ENCODE measurements at regions of chr6 and their contacts with region 1.

Region 1: DNA sequence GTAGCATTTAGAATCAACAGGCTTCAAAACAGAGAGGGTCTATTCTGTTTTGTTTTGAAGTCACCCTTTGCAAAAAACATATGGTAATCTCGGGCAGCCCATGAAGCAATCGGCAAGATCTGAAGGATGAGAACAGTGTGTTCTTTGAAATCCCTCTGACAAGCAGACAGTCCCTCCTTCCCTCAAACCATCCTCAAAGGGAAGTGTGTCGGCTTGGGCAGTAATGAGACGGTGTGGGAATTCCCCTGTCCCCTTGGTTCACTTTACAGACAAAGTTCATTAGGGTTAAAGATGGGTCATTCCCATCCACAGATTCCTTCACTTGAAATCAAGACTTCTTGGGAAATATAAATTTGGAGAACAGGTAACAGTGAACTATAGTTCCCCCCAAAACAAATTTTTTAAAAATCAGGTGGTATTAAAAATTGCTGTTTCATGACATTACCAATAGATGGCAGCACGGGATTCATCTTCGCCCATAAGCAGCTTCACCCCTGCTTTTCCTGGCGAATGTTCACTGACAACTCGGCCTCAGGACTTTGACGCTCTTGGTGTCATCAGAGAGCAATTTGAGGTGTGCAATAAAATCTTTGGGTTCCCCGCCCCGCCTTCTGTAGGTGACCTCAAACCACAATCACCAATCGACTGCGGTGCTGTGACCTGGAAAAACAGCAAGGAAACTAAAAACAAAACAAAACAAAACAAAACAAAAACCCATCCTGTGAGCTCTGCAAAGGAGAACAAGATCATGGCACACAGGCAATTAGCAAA is 159.3 kb upstream of the TNFAIP3 start:
- DNase-seq: peak; percentile 60 to 98 (median 82)
- ATAC-seq: peak; percentile 71
- H3K4me3 ChIP-seq: no peak overlapping the region
- H3K4me3 Mint-ChIP-seq: peak overlapping the region; percentile 3
- H3K27ac ChIP-seq: peak overlapping the region; percentile 46 to 82
- H3K27ac Mint-ChIP-seq: peak overlapping the region; percentile 88
- H3K4me1 ChIP-seq: peaks cover 37% of the 10 kb centered on the region
- H3K4me1 Mint-ChIP-seq: peaks cover 54% of the 10 kb centered on the region
- H3K27me3 ChIP-seq: no peaks in the 10 kb centered on the region
- H3K27me3 Mint-ChIP-seq: no peaks in the 10 kb centered on the region
- CTCF ChIP-seq: peak; percentile 81

Region 2: GRCh38 chr6:136191606-136192312 is 1516.0 kb before region 1 on chr6:
- CTCF ChIA-PET with region 1: no interaction called
- POLR2A ChIA-PET with region 1: no interaction called
- intact Hi-C with region 1: no loop called
- DNase-seq: no peak
- ATAC-seq: no peak
- H3K4me3 ChIP-seq: no peak overlapping the region
- H3K4me3 Mint-ChIP-seq: no peak overlapping the region
- H3K27ac ChIP-seq: no peak overlapping the region
- H3K27ac Mint-ChIP-seq: no peak overlapping the region
- H3K4me1 ChIP-seq: no peaks in the 10 kb centered on the region
- H3K4me1 Mint-ChIP-seq: no peaks in the 10 kb centered on the region
- H3K27me3 ChIP-seq: no peaks in the 10 kb centered on the region
- H3K27me3 Mint-ChIP-seq: no peaks in the 10 kb centered on the region
- CTCF ChIP-seq: no peak

Region 3: GRCh38 chr6:137697267-137697938 is 10.4 kb before region 1 on chr6:
- CTCF ChIA-PET with region 1: interaction called, 10 read pairs
- POLR2A ChIA-PET with region 1: interaction called, 3 read pairs
- intact Hi-C with region 1: no loop called
- DNase-seq: no peak
- ATAC-seq: no peak
- H3K4me3 ChIP-seq: no peak overlapping the region
- H3K4me3 Mint-ChIP-seq: no peak overlapping the region
- H3K27ac ChIP-seq: no peak overlapping the region
- H3K27ac Mint-ChIP-seq: no peak overlapping the region
- H3K4me1 ChIP-seq: peaks cover 12% of the 10 kb centered on the region
- H3K4me1 Mint-ChIP-seq: peaks cover 14% of the 10 kb centered on the region
- H3K27me3 ChIP-seq: no peaks in the 10 kb centered on the region
- H3K27me3 Mint-ChIP-seq: peaks cover 2% of the 10 kb centered on the region
- CTCF ChIP-seq: no peak

Region 4: DNA sequence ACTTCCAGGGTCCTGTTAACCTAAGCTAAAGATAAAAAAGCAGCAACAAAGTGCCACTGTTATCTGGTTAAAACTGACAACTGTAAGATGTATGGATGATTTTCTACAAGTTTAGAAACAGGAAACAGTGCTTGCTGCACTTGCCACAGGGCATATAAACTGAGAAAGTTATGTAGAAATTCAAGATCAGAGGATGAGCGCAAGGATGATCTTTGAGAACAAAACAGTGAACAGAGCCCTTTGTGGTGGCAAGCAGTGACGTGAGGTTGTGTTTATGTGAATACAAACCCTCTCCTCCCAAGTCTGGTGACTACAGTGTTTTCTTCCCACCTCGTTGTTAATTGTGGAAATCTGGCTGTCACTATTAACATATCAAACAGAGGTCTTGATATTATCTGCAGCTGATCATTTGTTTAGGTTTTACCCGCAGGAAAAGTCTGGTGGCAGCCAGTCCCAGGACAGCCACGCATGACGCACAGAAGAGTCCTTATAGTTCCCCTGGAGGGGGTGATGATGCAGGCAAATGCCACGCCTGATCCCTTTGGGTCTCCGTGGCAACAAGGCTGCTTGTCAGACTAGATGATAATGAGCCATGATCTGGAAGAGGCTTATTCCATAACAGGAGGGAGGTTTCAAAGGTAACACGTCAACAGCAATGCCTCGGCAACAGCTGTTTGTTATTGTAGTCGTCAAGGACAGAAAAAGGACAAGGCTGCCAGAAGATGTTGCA is 116.2 kb after region 1 on chr6:
- CTCF ChIA-PET with region 1: no interaction called
- POLR2A ChIA-PET with region 1: interaction called, 3 read pairs
- intact Hi-C with region 1: loop called (anchors 1 kb)
- DNase-seq: peak; percentile 54 to 98 (median 82)
- ATAC-seq: peak; percentile 71
- H3K4me3 ChIP-seq: peak overlapping the region; percentile 1 to 39
- H3K4me3 Mint-ChIP-seq: peak overlapping the region; percentile 59
- H3K27ac ChIP-seq: peak overlapping the region; percentile 91 to 99
- H3K27ac Mint-ChIP-seq: peak overlapping the region; percentile 97
- H3K4me1 ChIP-seq: peaks cover 75% of the 10 kb centered on the region
- H3K4me1 Mint-ChIP-seq: peaks cover 74% of the 10 kb centered on the region
- H3K27me3 ChIP-seq: no peaks in the 10 kb centered on the region
- H3K27me3 Mint-ChIP-seq: no peaks in the 10 kb centered on the region
- CTCF ChIP-seq: no peak

Region 5: DNA sequence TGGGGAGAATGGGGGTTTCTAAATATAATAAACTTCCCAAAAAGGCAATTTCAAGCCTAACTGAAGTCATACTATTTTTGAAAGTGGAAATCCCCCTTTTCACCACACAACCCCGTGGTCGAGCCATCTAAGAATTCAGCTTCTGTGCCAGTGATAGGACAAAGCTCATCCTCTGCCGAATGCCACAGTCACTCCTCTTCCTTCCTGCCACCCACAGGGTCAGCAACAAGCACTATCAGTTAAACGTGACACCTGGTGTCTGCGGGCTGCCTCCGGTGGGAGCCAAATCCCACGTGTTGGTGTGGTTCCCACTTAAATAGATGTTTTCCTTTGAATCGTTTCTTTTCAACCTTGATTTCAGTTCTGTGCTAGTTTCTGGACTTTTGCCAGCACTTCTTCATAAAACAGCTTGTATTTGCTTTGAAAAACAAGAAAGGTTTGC is 220.0 kb after region 1 on chr6:
- CTCF ChIA-PET with region 1: interaction called, 5 read pairs
- POLR2A ChIA-PET with region 1: interaction called, 4 read pairs
- intact Hi-C with region 1: loop called in 1 of 2 experiments (anchors 5 kb)
- DNase-seq: peak; percentile 49 to 95 (median 75)
- ATAC-seq: peak; percentile 99
- H3K4me3 ChIP-seq: no peak overlapping the region
- H3K4me3 Mint-ChIP-seq: peak overlapping the region; percentile 36
- H3K27ac ChIP-seq: peak overlapping the region; percentile 21 to 59
- H3K27ac Mint-ChIP-seq: peak overlapping the region; percentile 91
- H3K4me1 ChIP-seq: peaks cover 38% of the 10 kb centered on the region
- H3K4me1 Mint-ChIP-seq: peaks cover 41% of the 10 kb centered on the region
- H3K27me3 ChIP-seq: no peaks in the 10 kb centered on the region
- H3K27me3 Mint-ChIP-seq: no peaks in the 10 kb centered on the region
- CTCF ChIP-seq: no peak

Region 6: DNA sequence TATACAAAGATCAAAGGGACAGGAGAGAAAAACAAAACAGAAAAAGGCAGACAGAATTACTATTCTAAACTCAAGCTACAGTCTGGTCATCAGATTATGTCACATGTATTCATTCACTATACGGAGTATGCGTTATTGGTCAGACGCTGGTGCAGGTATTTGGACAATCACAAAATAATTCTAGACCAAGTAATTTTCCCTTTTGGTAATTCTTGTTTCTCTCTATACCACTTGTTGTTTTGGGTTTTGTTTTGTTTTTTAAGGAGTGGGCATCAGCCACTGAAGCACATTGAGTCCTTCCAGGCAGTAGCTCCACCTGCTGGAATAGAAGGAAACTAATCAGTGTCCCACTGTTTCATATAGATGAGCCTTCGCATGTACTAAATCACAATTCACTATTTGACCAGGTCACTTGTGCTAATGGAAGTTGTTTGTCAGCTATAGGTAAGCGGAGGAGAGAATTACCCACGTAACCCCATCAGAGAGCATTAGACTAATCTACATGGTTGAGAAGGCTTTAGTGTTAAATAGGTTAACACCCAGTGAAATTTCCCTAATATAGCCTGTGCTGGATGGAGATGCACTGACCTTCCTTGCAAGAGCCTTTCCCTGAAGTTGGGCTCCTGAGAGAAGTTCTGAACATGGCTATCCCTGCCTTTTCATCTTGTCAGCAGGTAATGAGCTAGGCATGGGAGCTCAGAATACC is 237.2 kb after region 1 on chr6:
- CTCF ChIA-PET with region 1: interaction called, 21 read pairs
- POLR2A ChIA-PET with region 1: interaction called, 4 read pairs
- intact Hi-C with region 1: loop called (anchors 1 kb)
- DNase-seq: peak in 3 of 9 experiments; percentile 20 to 69 (median 53)
- ATAC-seq: peak; percentile 68
- H3K4me3 ChIP-seq: no peak overlapping the region
- H3K4me3 Mint-ChIP-seq: no peak overlapping the region
- H3K27ac ChIP-seq: no peak overlapping the region
- H3K27ac Mint-ChIP-seq: no peak overlapping the region
- H3K4me1 ChIP-seq: peaks cover 18% of the 10 kb centered on the region
- H3K4me1 Mint-ChIP-seq: peaks cover 22% of the 10 kb centered on the region
- H3K27me3 ChIP-seq: no peaks in the 10 kb centered on the region
- H3K27me3 Mint-ChIP-seq: no peaks in the 10 kb centered on the region
- CTCF ChIP-seq: peak; percentile 72

Region 7: GRCh38 chr6:138001750-138002349 is 294.1 kb after region 1 on chr6:
- CTCF ChIA-PET with region 1: interaction called, 30 read pairs
- POLR2A ChIA-PET with region 1: no interaction called
- intact Hi-C with region 1: loop called (anchors 1 to 2 kb)
- DNase-seq: peak; percentile 39 to 75 (median 68)
- ATAC-seq: peak; percentile 54
- H3K4me3 ChIP-seq: no peak overlapping the region
- H3K4me3 Mint-ChIP-seq: no peak overlapping the region
- H3K27ac ChIP-seq: no peak overlapping the region
- H3K27ac Mint-ChIP-seq: no peak overlapping the region
- H3K4me1 ChIP-seq: no peaks in the 10 kb centered on the region
- H3K4me1 Mint-ChIP-seq: peaks cover 8% of the 10 kb centered on the region
- H3K27me3 ChIP-seq: no peaks in the 10 kb centered on the region
- H3K27me3 Mint-ChIP-seq: no peaks in the 10 kb centered on the region
- CTCF ChIP-seq: peak; percentile 88

Region 8: DNA sequence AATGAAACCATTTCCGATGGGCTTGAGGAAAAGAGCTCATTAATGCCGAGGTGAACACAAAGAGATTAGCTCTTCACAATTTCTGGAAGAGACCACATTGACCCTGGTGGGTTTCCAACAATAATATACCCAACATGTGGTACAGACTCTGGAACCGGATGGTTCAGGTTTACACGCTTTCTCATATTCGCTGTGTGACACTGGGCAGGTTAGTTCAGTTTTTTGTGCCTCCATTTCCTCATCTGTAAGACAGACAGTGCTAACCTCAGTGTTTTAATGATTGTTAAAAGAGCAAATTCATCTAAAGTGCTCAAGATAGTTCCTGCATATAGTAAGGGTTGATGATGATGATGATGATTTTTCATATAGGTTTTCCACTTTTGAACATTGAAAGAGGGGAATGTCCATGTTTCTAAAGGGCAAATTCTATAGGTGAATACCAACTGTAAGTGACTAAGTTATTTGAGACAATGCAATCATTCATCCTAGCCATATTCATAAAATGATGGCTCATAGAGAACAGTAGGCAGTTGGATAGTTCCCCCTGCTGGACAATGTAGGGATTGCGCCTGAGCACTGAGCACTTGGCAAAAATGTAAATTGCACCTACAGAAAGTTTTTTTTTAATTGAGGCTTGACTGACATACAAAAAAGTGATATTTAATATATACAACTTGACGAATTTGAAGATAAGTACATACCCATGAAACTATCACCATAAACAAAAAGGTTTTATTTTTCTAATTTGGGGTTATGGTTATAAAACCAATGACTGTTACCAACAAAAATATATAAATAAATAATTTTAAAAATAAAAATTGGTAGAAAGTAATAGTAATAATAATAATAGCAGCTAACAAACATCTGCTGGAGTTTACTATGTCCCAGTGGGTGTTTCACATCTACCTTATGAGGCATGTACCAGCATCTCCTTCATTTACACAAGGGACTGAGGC is 401.5 kb after region 1 on chr6:
- CTCF ChIA-PET with region 1: interaction called, 3 read pairs
- POLR2A ChIA-PET with region 1: no interaction called
- intact Hi-C with region 1: loop called (anchors 1 kb)
- DNase-seq: peak; percentile 61 to 85 (median 81)
- ATAC-seq: peak; percentile 71
- H3K4me3 ChIP-seq: no peak overlapping the region
- H3K4me3 Mint-ChIP-seq: no peak overlapping the region
- H3K27ac ChIP-seq: no peak overlapping the region
- H3K27ac Mint-ChIP-seq: no peak overlapping the region
- H3K4me1 ChIP-seq: peaks cover 9% of the 10 kb centered on the region
- H3K4me1 Mint-ChIP-seq: peaks cover 18% of the 10 kb centered on the region
- H3K27me3 ChIP-seq: peaks cover 5 to 7% of the 10 kb centered on the region in 2 experiments
- H3K27me3 Mint-ChIP-seq: peaks cover 25% of the 10 kb centered on the region
- CTCF ChIP-seq: peak; percentile 92

Measured in CD8-positive, alpha-beta T cell (primary cell).